Astrocyte of the cerebellum (primary cell): ENCODE measurements at regions of chr10 and their contacts with region 1.

Region 1: GRCh38 chr10:78115135-78115853 is 81.6 kb downstream of the RPS24 start:
- DNase-seq: no peak
- H3K4me3 ChIP-seq: no peak overlapping the region
- CTCF ChIP-seq: no peak

Region 2: GRCh38 chr10:78165617-78166016 is 50.3 kb after region 1 on chr10:
- in situ Hi-C with region 1: loop called (anchors 5 kb)
- DNase-seq: no peak
- H3K4me3 ChIP-seq: no peak overlapping the region
- CTCF ChIP-seq: peak; percentile 4